Ovary (tissue), 10 donors: ENCODE measurements at regions of chr9 and their contacts with region 1.

Region 1: DNA sequence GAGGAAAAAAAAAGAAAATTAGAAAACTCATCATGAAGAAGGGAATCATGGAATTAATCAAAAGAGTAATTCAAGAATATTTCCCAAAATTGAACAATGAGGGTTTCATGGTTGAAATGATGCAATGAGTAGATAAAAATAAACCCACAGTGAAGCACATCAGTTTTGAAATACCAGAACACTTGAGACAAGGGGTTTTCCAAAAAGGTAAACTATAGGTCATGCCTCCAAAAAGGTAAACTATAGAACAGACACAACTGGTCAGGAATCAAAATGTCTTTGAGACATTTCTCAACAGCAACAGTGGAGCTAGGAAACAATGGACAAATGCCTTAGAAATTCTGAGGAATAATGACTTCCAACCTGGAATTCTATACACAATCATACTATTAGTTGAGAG is 60.2 kb upstream of the PCSK5 start:
- DNase-seq: no peak
- H3K4me3 ChIP-seq: no peak overlapping the region
- H3K27ac ChIP-seq: no peak overlapping the region
- H3K4me1 ChIP-seq: peaks cover 3% of the 10 kb centered on the region
- H3K27me3 ChIP-seq: no peaks in the 10 kb centered on the region
- CTCF ChIP-seq: no peak
- EP300 ChIP-seq: no peak
- POLR2A ChIP-seq: no peak

Region 2: DNA sequence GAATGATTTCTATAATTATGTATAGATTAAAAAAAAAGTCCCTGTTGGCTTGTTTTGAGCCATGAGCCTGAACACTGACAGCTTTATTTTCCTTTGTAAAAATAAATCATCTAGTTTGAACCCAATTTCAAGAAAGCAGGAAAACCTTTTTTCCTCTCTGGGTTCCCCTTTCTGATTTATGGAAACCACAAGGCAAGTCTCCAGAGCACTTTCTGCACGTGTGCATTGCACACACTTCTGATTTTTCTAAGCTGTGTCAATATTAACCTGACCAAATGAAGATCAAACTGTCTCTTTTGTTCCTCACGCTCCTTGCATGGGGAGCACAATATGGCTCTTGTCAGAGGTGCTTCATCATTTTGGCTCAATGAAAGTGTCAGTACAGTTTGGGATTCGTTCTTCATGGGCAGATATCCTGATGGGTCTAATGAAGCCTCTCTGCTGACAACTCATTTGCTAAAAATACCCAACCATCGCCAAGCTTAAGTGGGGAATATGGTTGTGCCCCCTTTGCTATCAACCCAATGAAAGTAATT is 894.8 kb after region 1 on chr9:
- intact Hi-C with region 1: loop called in 1 of 4 experiments (anchors 10 kb)
- DNase-seq: no peak
- H3K4me3 ChIP-seq: no peak overlapping the region
- H3K27ac ChIP-seq: no peak overlapping the region
- H3K4me1 ChIP-seq: no peaks in the 10 kb centered on the region
- H3K27me3 ChIP-seq: no peaks in the 10 kb centered on the region
- CTCF ChIP-seq: no peak
- EP300 ChIP-seq: no peak
- POLR2A ChIP-seq: no peak